Natural killer cell (primary cell): ENCODE measurements at regions of chr10 and their contacts with region 1.

Region 1: DNA sequence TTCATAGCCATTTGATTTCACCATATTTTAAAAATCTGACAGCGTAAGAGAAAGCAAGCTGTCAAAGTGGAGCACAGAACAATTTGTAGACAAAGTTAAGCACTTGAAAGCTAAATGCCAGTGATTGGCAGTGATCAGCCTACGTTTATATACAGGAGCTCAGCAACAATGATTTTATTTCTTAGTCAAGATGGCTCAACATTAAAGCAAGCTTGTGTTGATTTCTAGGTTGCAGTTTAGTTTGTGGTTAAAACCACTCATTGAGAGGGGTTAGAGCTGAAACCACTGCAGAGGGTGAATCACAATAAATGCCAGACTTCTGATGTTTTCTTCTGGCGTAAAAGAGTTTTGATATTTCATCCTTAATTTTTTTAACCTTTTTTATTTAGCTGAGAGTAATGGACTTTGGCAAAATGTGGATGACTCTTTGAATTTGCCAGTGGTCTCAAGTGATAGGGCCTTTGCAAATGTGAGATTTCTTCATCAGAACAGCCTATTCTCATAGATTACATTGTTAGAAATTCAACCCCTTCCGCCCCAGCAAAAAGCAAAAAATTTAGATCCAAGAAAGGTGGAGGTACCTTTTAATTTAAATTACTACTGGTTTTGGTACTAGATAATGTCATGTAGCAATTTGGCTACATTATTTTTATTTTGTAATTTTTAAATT is 73.8 kb downstream of the SHOC2 start:
- DNase-seq: peak in 1 of 2 donors; percentile 65
- ATAC-seq: peak; percentile 77 to 98 (median 94)
- H3K4me3 ChIP-seq: no peak overlapping the region
- H3K4me3 Mint-ChIP-seq: peak overlapping the region; percentile 65
- H3K27ac ChIP-seq: no peak overlapping the region
- H3K27ac Mint-ChIP-seq: peak overlapping the region; percentile 65 to 67
- H3K4me1 ChIP-seq: no peaks in the 10 kb centered on the region
- H3K4me1 Mint-ChIP-seq: peaks cover 32 to 36% of the 10 kb centered on the region in 2 donors
- H3K27me3 ChIP-seq: no peaks in the 10 kb centered on the region
- H3K27me3 Mint-ChIP-seq: no peaks in the 10 kb centered on the region
- CTCF ChIP-seq: no peak

Region 2: DNA sequence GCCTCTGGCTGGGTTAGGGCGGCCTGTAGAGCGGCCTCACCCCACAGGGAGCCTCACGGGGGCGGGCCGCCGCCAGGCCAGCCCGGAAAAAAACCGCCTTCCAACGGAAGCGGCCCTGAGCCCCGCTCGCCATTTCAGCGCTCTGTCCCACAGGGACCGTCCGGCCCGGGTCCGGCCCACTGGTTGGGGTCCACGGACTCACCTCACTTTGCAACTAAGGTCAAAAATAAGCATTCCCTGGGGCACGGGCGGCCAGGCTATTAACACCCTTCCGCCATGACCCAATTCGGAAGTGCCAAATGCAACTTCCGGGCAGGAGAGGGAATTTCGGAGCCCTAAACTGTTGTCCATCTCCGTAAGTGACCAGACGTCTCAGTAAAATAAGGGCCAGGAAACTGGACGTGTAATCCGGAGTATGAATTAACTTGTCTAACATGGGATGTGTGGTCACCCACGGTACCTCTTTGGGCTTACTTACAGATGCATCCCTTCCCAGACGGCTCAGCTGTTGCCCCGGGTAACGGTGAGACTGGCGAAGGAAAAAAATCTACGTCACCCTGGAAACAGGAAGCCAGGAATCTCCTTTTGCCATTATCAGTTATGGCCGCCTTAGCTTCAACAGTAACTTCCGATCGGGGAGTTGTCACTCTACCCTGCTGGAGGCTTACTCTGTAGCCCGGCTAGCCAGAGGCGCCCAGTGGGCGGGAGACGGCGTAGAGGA is 74.4 kb before region 1 on chr10 and contains the start of gene BBIP1:
- intact Hi-C with region 1: loop called (anchors 1 kb)
- DNase-seq: peak; percentile 81 to 99
- ATAC-seq: peak; percentile 88 to 98 (median 90)
- H3K4me3 ChIP-seq: peak within 1 kb of the TSS; percentile 86
- H3K4me3 Mint-ChIP-seq: peak within 1 kb of the TSS; percentile 97
- H3K27ac ChIP-seq: peak within 1 kb of the TSS; percentile 98
- H3K27ac Mint-ChIP-seq: peak within 1 kb of the TSS; percentile 99 to 100
- H3K4me1 ChIP-seq: peaks cover 7% of the 10 kb centered on the region
- H3K4me1 Mint-ChIP-seq: peaks cover 33 to 46% of the 10 kb centered on the region in 2 donors
- H3K27me3 ChIP-seq: no peaks in the 10 kb centered on the region
- H3K27me3 Mint-ChIP-seq: no peaks in the 10 kb centered on the region
- CTCF ChIP-seq: no peak
- total RNA-seq, gene BBIP1: 27.2 to 58.6 (median 27.7) TPM

Region 3: GRCh38 chr10:111030042-111030750 is 37.0 kb after region 1 on chr10:
- intact Hi-C with region 1: no loop called
- DNase-seq: no peak
- ATAC-seq: peak in 2 of 3 donors; percentile 36 to 42
- H3K4me3 ChIP-seq: no peak overlapping the region
- H3K4me3 Mint-ChIP-seq: no peak overlapping the region
- H3K27ac ChIP-seq: no peak overlapping the region
- H3K27ac Mint-ChIP-seq: peak overlapping the region in 1 of 2 donors; percentile 35
- H3K4me1 ChIP-seq: no peaks in the 10 kb centered on the region
- H3K4me1 Mint-ChIP-seq: peaks cover 8 to 18% of the 10 kb centered on the region in 2 donors
- H3K27me3 ChIP-seq: no peaks in the 10 kb centered on the region
- H3K27me3 Mint-ChIP-seq: no peaks in the 10 kb centered on the region
- CTCF ChIP-seq: no peak